ENCODE measurements at regions of chr9 and their contacts with region 1.

Region 1: GRCh38 chr9:96844040-96844439 is 10.3 kb downstream of the ZNF782 start:
- DNase-seq: no peak
- ATAC-seq: no peak
- H3K4me3 ChIP-seq: no peak overlapping the region
- H3K27ac ChIP-seq: no peak overlapping the region
- H3K4me1 ChIP-seq: no peaks in the 10 kb centered on the region
- H3K27me3 ChIP-seq: no peaks in the 10 kb centered on the region
- CTCF ChIP-seq: no peak

Region 2: DNA sequence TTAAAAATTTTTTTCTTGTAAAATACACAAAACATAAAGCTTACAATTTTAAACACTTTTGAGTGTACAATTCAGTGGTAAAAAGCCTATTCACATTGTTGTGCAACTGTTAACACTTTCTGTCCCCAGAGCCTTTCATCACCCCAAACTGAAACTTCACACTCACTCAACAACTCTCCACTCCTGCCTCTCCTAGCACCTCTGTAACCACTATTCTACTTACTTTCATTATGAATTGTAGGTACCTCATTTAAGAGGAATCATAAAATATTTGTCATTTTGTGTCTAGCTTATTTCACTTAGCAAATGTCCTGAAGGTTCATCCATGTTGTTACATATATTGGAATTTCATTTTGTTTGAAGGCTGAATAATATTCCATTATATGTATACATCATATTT is 61.8 kb before region 1 on chr9:
- intact Hi-C with region 1: loop called in 1 of 10 experiments (anchors 10 kb)
- DNase-seq: no peak
- ATAC-seq: no peak
- H3K4me3 ChIP-seq: no peak overlapping the region
- H3K27ac ChIP-seq: no peak overlapping the region
- H3K4me1 ChIP-seq: peaks cover 0 to 18% (median 12%) of the 10 kb centered on the region in 9 donors
- H3K27me3 ChIP-seq: no peaks in the 10 kb centered on the region
- CTCF ChIP-seq: no peak